GM12878 (cell line): ENCODE measurements at regions of chr6 and their contacts with region 1.

Region 1: DNA sequence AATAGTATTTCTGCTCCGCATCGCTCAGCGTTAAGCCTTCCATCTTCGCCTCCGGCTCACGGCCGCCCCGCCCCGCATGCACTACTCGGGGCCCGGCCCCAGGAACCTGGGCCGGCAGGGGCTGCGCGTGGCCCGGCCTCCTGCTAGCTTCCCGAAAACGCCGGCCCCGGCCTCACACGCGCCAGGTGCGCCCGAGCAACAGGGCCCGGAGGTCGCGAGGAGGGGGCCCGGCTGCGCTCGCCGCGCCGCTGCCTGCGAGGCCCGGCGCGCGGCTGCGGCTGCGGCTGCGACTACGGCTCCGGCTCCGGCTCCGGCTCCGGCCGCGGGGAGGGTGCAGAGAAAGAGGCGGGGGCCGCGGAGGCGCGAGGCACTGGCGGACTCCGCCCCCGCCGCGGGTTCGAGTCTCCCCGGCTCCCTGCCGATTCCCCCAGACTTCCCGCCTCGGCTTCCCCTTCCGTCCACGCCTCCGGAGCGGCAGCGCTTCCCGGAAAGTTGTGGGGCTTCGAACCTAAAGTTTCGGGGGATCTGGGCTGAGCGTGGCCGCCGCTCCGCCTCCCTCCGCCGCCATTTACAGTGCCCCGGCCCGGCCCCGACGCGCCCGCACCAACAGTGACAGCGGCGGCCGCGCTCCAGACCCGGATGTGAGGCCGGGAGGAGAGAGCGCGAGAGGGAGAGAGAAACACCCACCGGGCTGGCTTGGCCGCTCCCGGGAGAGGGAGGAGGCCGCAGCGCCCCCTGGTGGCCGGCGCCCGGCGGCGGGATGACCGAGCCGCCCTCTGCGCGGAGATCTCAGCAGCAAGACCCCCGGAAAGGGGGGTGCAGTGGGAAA is at the start of gene REPS1:
- DNase-seq: peak; percentile 40
- ATAC-seq: peak; percentile 87
- H3K4me3 ChIP-seq: peak within 1 kb of the TSS; percentile 96
- H3K27ac ChIP-seq: peak within 1 kb of the TSS; percentile 86
- H3K4me1 ChIP-seq: no peaks in the 10 kb centered on the region
- H3K27me3 ChIP-seq: no peaks in the 10 kb centered on the region
- CTCF ChIP-seq: peak; percentile 83 to 93 (median 90)
- EP300 ChIP-seq: no peak
- POLR2A ChIP-seq: peak; percentile 96
- RAD21 ChIP-seq: peak; percentile 68
- polyA plus RNA-seq, gene REPS1: 13.7 to 21.2 TPM

Region 2: DNA sequence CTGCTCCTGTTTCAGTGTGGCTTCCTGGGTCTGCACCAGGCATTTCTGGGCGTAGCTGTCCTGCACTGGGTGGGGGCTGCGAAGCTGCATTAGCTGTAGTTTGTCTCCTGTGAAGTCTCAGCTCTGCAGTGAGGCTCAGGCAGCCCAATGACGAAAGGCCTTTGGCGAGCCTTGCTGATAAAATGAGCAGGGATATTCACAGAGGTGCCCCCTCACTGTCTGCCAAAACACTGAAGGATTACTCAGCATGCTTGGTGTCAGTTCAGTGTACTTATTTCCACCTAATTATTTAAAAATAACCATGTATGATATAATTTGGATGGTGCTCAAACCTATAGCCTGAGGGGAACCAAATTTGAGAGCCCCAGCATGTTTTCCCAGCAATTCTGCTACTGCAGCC is 118.5 kb before region 1 on chr6:
- CTCF ChIA-PET with region 1: interaction called, 4 read pairs
- POLR2A ChIA-PET with region 1: no interaction called
- RAD21 ChIA-PET with region 1: interaction called, 11 read pairs
- SMC1A ChIA-PET with region 1: interaction called, 3 read pairs
- in situ Hi-C with region 1: no loop called
- intact Hi-C with region 1: no loop called
- DNase-seq: no peak
- ATAC-seq: no peak; the same call in 2 of the 3 replicates
- H3K4me3 ChIP-seq: no peak overlapping the region
- H3K27ac ChIP-seq: peak overlapping the region; percentile 34
- H3K4me1 ChIP-seq: peaks cover 21% of the 10 kb centered on the region
- H3K27me3 ChIP-seq: no peaks in the 10 kb centered on the region
- CTCF ChIP-seq: no peak
- EP300 ChIP-seq: no peak
- POLR2A ChIP-seq: no peak
- RAD21 ChIP-seq: no peak

Region 3: GRCh38 chr6:138891255-138891986 is 96.4 kb before region 1 on chr6:
- CTCF ChIA-PET with region 1: interaction called, 4 read pairs
- POLR2A ChIA-PET with region 1: interaction called, 4 read pairs
- RAD21 ChIA-PET with region 1: interaction called, 15 read pairs
- SMC1A ChIA-PET with region 1: interaction called, 4 read pairs
- in situ Hi-C with region 1: no loop called
- intact Hi-C with region 1: no loop called
- DNase-seq: no peak
- ATAC-seq: no peak
- H3K4me3 ChIP-seq: no peak overlapping the region
- H3K27ac ChIP-seq: no peak overlapping the region
- H3K4me1 ChIP-seq: peaks cover 12% of the 10 kb centered on the region
- H3K27me3 ChIP-seq: no peaks in the 10 kb centered on the region
- CTCF ChIP-seq: no peak
- EP300 ChIP-seq: no peak
- POLR2A ChIP-seq: no peak
- RAD21 ChIP-seq: no peak

Region 4: DNA sequence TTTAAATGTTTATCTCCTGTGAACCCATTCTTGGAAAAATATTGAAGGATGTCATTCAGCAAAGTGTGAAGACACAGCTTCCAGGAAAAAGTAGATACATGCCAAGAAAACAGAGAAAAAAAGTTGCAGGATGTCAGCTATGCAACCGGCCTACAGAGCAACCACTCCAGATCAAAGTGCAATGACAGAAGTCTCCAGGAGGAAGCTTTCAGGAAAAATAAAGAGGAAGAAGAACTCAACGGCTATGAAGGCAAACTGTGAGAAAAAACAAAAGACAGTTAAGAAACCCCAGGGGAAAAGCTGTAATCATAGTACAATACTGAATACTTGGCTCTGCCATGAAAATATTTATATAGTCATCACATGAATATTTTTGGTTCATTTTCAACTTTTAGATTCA is 30.4 kb before region 1 on chr6:
- CTCF ChIA-PET with region 1: interaction called, 5 read pairs
- POLR2A ChIA-PET with region 1: interaction called, 4 read pairs
- RAD21 ChIA-PET with region 1: interaction called, 11 read pairs
- SMC1A ChIA-PET with region 1: interaction called, 5 read pairs
- in situ Hi-C with region 1: no loop called
- intact Hi-C with region 1: no loop called
- DNase-seq: no peak
- ATAC-seq: peak; percentile 62
- H3K4me3 ChIP-seq: no peak overlapping the region
- H3K27ac ChIP-seq: no peak overlapping the region
- H3K4me1 ChIP-seq: no peaks in the 10 kb centered on the region; the same call in 1 of the 2 replicates
- H3K27me3 ChIP-seq: no peaks in the 10 kb centered on the region
- CTCF ChIP-seq: no peak
- EP300 ChIP-seq: no peak
- POLR2A ChIP-seq: no peak
- RAD21 ChIP-seq: no peak

Region 5: DNA sequence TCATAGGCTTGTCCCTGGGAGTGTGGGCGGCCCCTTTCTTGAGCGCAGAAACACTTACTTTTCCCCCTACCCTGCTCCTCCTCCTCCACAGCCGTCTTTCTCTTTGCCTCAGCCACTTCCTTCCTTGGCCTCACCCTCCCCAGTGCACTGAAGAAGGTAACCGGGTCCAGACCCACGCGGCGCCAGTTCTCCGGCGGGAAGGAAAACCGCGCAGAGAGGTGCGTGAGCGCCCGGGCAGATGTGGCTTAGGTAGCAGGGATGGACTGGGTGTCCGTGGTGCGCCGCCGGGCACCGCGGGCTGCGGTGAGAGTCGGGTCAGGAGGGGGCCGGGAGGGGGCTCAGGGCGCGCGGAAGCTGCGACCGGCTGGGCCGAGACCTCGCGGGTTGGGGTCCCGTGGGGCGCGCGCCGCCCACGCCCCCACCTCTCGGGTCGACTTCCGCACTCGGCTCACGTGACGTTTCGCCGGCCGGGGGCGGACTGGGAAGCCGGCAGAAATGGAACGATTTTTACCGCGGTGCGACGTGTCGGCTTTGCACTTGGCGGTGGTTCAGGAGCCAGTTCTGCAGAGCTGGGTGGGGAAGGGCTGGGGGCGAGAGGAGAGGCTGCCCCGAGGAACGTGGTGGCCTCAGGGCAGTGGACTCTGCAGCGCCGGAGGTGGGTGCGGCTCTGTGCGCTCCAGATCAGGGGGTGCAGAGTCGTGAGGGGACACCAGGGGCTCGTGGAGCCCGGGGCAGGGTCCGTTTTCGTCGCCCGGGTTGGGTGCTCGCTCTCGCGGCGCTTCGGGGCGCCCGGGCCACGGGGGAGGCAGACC is 41.0 kb after region 1 on chr6 and contains the start of gene ABRACL:
- CTCF ChIA-PET with region 1: interaction called, 8 read pairs
- POLR2A ChIA-PET with region 1: interaction called, 5 read pairs
- RAD21 ChIA-PET with region 1: interaction called, 5 read pairs
- SMC1A ChIA-PET with region 1: interaction called, 21 read pairs
- in situ Hi-C with region 1: no loop called
- intact Hi-C with region 1: loop called (anchors 2 kb)
- DNase-seq: peak; percentile 45
- ATAC-seq: peak; percentile 80
- H3K4me3 ChIP-seq: peak within 1 kb of the TSS; percentile 93
- H3K27ac ChIP-seq: peak within 1 kb of the TSS; percentile 88
- H3K4me1 ChIP-seq: peaks cover 6% of the 10 kb centered on the region
- H3K27me3 ChIP-seq: no peaks in the 10 kb centered on the region
- CTCF ChIP-seq: no peak
- EP300 ChIP-seq: no peak
- POLR2A ChIP-seq: peak; percentile 93
- RAD21 ChIP-seq: 0 out of 2 replicates have a peak, but pooled peaks have one; percentile 8
- polyA plus RNA-seq, gene ABRACL: 636 to 647 TPM